ENCODE measurements at regions of chr11 and their contacts with region 1.

Region 1: DNA sequence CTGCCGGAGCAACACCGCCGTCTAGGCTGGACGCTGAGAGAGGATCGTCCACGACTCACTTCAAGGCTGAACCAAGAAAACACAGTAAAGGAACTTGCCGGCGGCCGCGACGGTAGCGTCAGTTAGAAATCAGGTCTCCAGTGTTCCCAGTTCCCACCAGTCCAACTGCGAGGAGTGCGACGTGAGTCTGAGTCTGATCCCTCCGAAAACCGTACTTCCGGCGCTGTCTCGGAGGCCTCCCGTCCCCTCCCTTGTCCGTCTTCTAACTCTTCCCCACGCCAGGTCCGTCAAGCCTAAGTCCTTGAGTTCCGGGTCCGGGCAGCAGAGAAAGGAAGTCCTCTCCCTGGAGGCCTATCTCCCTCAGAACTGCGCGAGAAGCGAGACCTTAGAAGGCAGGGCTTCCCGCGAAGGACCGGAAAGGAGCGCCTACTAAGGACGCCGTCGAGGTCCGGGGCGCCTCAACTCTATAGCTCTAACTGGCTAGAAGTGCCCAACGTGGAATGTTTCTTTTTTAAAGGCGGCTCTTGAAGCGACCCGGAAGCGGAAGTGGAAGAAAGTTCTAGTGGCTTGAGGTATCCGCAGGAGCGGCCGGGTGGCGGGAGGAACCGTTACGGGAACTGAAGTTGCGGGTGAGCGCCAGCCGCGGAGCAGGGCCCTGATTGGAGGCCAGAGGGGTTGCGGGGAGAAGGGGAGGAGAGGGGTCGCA is at the starts of genes BANF1 and EIF1AD:
- DNase-seq: peak; percentile 99
- ATAC-seq: peak; percentile 83
- H3K4me3 ChIP-seq: peak within 1 kb of the TSS; percentile 98 to 100
- H3K27ac ChIP-seq: peak within 1 kb of the TSS; percentile 87
- H3K4me1 ChIP-seq: peaks cover 12 to 37% of the 10 kb centered on the region in 2 experiments
- H3K27me3 ChIP-seq: no peaks in the 10 kb centered on the region
- CTCF ChIP-seq: no peak
- POLR2A ChIP-seq: peak; percentile 68
- RAD21 ChIP-seq: no peak
- total RNA-seq, gene BANF1: 356 TPM
- total RNA-seq, gene EIF1AD: 45.5 TPM

Region 2: GRCh38 chr11:65859200-65859811 is 142.8 kb before region 1 on chr11:
- CTCF ChIA-PET with region 1: no interaction called
- POLR2A ChIA-PET with region 1: interaction called, 7 read pairs
- RAD21 ChIA-PET with region 1: no interaction called
- intact Hi-C with region 1: loop called (anchors 1 kb)
- DNase-seq: peak; percentile 95
- ATAC-seq: peak; percentile 66
- H3K4me3 ChIP-seq: peak overlapping the region; percentile 85 to 100
- H3K27ac ChIP-seq: peak overlapping the region; percentile 97
- H3K4me1 ChIP-seq: peaks cover 23 to 44% of the 10 kb centered on the region in 2 experiments
- H3K27me3 ChIP-seq: no peaks in the 10 kb centered on the region
- CTCF ChIP-seq: no peak
- POLR2A ChIP-seq: peak; percentile 78
- RAD21 ChIP-seq: no peak

Region 3: GRCh38 chr11:65961232-65961901 is 40.7 kb before region 1 on chr11 and contains the start of gene SART1:
- CTCF ChIA-PET with region 1: no interaction called
- POLR2A ChIA-PET with region 1: no interaction called
- RAD21 ChIA-PET with region 1: no interaction called
- intact Hi-C with region 1: loop called (anchors 1 kb)
- DNase-seq: peak; percentile 95
- ATAC-seq: peak; percentile 90
- H3K4me3 ChIP-seq: peak within 1 kb of the TSS; percentile 76
- H3K27ac ChIP-seq: peak within 1 kb of the TSS; percentile 81
- H3K4me1 ChIP-seq: peaks cover 8 to 21% of the 10 kb centered on the region in 2 experiments; a peak in 3 of 4 replicates
- H3K27me3 ChIP-seq: no peaks in the 10 kb centered on the region
- CTCF ChIP-seq: no peak
- POLR2A ChIP-seq: peak; percentile 71
- RAD21 ChIP-seq: no peak
- total RNA-seq, gene SART1: 47.9 TPM

Region 4: DNA sequence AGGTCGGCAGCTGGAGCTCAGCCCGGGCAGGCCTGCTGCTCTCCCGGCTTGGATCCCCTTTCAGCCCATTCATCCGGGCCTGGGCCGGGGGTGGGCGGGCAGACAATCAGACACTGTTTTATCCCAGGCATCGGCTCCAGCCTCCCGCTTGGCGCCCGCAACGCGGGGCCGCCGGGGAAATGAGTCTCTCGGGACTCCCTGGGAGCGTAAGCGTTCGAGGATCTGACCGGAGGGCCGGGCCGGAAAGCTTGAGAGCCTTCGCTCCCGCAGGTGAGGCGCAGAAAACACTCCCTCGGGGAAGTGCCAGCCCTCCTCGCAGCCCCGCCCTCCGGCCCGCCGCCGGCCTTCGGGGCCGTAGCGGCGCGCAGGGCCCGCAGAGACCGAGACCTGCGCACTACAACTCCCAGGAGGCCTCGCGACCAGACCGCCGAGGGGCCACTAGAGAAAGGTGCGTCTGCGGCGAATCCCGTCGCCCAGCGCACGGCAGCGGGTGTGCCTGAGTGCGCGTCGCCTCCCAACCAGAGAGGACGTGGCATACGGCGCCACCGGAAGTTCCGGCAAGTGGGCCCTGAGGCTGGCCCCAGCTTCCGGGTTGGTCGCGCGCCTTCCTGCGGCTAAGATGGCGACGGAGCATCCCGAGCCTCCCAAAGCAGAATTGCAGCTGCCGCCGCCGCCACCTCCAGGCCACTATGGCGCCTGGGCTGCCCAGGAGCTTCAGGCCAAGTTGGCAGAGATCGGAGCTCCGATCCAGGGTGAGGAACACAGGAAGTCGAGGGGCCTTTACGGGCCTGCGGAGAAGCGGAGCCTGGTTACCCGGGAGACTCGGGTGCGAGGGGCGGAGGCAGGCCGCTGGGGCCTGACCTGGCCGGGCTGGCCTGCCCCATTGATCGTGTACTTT is 49.9 kb after region 1 on chr11 and contains the start of gene SF3B2:
- CTCF ChIA-PET with region 1: interaction called, 6 read pairs
- POLR2A ChIA-PET with region 1: interaction called, 3 read pairs
- RAD21 ChIA-PET with region 1: interaction called in 1 of 2 experiments, 4 read pairs
- intact Hi-C with region 1: loop called (anchors 1 kb)
- DNase-seq: peak; percentile 96
- ATAC-seq: peak; percentile 99
- H3K4me3 ChIP-seq: peak within 1 kb of the TSS; percentile 79 to 100
- H3K27ac ChIP-seq: peak within 1 kb of the TSS; percentile 83
- H3K4me1 ChIP-seq: peaks cover 21% of the 10 kb centered on the region in 2 experiments
- H3K27me3 ChIP-seq: no peaks in the 10 kb centered on the region
- CTCF ChIP-seq: no peak
- POLR2A ChIP-seq: peak; percentile 22
- RAD21 ChIP-seq: no peak
- total RNA-seq, gene SF3B2: 300 TPM